ENCODE measurements at regions of chr17 and their contacts with region 1.

Region 1: DNA sequence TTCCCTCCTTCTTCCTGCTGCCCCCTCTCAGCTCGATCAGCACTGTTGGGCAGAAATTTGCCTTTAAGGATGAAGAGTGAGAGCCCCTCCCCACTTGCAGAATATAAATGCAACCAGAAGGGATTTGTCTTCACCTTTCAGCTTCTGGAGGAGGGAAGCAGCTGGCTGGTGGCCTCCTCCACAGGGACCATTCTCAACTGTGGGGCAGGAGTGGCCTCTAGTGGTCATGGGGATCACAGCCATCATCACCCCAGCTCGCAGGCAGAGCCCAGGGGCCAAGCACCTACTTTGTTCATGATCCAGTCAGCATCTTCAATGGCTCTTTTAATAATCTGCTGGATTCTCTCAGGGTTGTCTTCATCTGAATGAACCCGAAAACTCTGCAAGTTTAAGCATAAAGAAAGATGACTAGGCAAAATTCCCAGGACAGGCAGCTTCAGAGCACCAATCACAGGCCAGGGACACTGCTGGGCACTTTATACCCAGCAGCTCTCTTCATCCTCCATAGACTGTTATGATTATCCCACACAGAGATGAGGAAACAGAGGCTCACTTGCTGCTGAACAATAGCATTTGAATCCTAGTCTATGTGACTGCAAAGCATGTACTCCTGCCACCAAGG is 13.1 kb downstream of the LYRM9 start:
- DNase-seq: peak; percentile 88
- H3K4me3 ChIP-seq: no peak overlapping the region; a peak in 1 of 4 replicates
- H3K27ac ChIP-seq: no peak overlapping the region
- H3K4me1 ChIP-seq: peaks cover 0 to 3% of the 10 kb centered on the region in 2 experiments; a peak in 1 of 4 replicates
- H3K27me3 ChIP-seq: no peaks in the 10 kb centered on the region
- CTCF ChIP-seq: peak; percentile 89
- EP300 ChIP-seq: no peak
- RAD21 ChIP-seq: peak; percentile 95

Region 2: DNA sequence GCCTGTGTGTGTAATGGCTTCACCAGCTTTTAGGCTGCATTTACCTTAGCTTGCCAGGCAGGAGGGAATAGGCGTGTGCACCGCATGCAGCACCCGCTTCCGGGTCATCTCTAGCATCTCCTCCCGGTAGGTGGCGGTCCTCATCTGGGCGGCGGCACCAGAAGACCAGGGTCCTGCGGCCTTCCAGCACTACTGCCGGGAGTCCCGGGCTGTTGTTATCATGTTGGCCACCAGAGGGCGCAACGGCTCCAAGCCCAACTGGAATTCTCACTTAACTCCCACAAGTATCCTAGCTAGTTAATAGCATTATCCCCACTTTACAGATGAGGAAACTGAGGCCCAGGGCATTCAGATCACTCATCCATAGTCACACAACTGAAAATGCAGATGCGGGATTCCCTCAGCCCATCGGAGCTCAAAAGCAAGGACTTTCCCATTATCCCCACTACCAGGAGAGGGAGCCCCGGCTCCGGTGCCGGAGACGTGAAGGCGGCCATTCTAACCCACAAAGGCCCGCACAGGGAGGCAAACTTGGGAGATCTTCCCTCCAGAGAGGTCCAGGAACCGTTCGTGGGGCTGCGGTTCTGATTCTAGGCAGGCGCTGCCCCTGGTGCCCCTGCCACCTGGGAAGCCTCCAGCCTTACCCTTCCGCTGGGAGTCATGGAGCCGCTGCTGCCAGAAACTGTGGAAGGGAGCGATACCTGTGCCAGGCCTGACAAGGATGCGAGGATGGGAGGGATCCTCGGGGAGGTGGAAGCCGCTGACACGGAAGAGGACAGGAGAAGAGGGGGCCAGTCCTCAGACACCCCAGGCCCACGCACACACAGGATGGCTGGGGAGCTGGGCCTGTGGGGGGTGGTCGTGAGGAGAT is 225.2 kb before region 1 on chr17:
- CTCF ChIA-PET with region 1: interaction called, 104 read pairs
- POLR2A ChIA-PET with region 1: no interaction called
- DNase-seq: peak; percentile 93
- H3K4me3 ChIP-seq: peak overlapping the region in 1 of 2 experiments; percentile 43; a peak in 1 of 4 replicates
- H3K27ac ChIP-seq: no peak overlapping the region
- H3K4me1 ChIP-seq: no peaks in the 10 kb centered on the region; a peak in 1 of 4 replicates
- H3K27me3 ChIP-seq: no peaks in the 10 kb centered on the region
- CTCF ChIP-seq: peak; percentile 93
- EP300 ChIP-seq: no peak
- RAD21 ChIP-seq: peak; percentile 68

Region 3: GRCh38 chr17:27778193-27778592 is 101.9 kb before region 1 on chr17:
- CTCF ChIA-PET with region 1: interaction called, 19 read pairs
- POLR2A ChIA-PET with region 1: no interaction called
- DNase-seq: no peak
- H3K4me3 ChIP-seq: no peak overlapping the region
- H3K27ac ChIP-seq: no peak overlapping the region
- H3K4me1 ChIP-seq: peaks cover 0 to 3% of the 10 kb centered on the region in 2 experiments; a peak in 1 of 4 replicates
- H3K27me3 ChIP-seq: no peaks in the 10 kb centered on the region
- CTCF ChIP-seq: no peak
- EP300 ChIP-seq: no peak
- RAD21 ChIP-seq: no peak

Region 4: GRCh38 chr17:27805520-27806146 is 74.5 kb before region 1 on chr17:
- CTCF ChIA-PET with region 1: interaction called, 275 read pairs
- POLR2A ChIA-PET with region 1: no interaction called
- DNase-seq: peak; percentile 82
- H3K4me3 ChIP-seq: peak overlapping the region; percentile 3 to 32; a peak in 3 of 4 replicates
- H3K27ac ChIP-seq: no peak overlapping the region
- H3K4me1 ChIP-seq: peaks cover 0 to 9% of the 10 kb centered on the region in 2 experiments; a peak in 1 of 4 replicates
- H3K27me3 ChIP-seq: no peaks in the 10 kb centered on the region
- CTCF ChIP-seq: peak; percentile 78
- EP300 ChIP-seq: no peak
- RAD21 ChIP-seq: peak; percentile 87

Region 5: DNA sequence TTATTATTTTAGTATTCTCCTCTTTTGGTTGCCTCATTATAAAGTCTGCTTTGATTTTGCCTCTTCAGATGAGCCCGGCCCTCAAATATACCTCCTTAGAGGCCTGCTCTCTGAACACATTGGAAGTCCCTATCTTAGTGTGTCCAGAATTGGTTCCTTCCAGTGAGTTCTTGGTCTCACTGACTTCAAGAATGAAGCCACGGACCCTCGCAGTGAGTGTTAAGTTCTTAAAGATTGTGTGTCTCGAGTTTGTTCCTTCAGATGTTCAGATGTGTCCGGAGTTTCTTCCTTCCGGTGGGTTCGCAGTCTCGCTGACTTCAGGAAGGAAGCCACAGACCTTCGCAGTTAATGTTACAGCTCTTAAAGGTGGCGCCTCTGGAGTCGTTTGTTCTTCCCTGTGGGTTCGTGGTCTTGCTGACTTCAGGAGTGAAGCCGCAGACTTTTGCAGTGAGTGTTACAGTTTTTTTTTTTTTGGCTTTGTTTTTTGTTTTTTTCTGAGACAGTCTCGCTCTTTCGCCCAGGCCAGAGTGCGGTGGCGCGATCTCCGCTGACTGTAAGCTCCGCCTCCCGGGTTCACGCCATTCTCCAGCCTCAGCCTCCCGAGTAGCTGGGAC is 33.9 kb before region 1 on chr17:
- CTCF ChIA-PET with region 1: interaction called, 18 read pairs
- POLR2A ChIA-PET with region 1: no interaction called
- DNase-seq: no peak
- H3K4me3 ChIP-seq: no peak overlapping the region
- H3K27ac ChIP-seq: no peak overlapping the region
- H3K4me1 ChIP-seq: no peaks in the 10 kb centered on the region
- H3K27me3 ChIP-seq: no peaks in the 10 kb centered on the region; the same call in 1 of the 2 replicates
- CTCF ChIP-seq: no peak
- EP300 ChIP-seq: no peak
- RAD21 ChIP-seq: no peak

Region 6: DNA sequence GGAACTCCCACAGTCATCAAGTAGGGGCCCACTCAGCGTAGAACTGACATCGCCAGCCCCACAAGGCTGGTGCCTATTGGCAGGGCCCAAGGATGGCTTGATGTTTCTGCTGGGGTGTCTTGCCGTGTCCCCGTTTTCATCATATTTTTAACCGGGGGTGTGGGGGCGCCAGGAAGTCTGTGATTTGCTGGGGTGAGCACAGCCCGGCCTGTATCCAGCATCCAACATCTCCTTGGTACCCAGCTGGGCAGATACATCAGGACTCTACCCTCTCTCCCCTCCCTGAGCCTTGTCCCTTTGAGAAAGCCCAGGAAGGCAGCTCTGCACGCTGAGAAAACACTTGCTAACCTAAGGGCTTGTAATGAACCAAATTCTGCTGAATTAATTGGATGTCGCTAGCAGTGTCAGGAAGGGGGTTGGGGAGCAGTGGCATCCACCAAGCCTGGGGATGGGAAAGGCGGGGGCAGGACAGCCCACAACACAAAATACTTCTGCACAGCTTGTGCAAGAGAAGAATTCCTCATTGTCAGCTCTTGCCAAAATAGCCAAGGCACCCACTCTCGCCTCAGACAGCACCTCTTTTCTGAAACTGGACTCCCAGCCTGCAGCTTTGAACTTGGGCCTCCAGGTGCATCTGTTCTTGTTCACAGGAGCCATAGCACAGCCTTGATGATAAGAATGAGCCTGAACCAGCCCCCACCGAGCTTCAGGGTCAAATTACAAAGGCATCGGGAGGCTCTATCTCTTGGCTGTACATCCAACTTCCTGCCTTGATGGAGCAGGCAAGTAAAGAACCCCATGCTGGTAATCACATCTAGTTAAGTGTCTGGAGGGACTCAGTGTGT is 76.7 kb after region 1 on chr17:
- CTCF ChIA-PET with region 1: no interaction called
- POLR2A ChIA-PET with region 1: no interaction called
- DNase-seq: peak; percentile 25
- H3K4me3 ChIP-seq: no peak overlapping the region
- H3K27ac ChIP-seq: no peak overlapping the region
- H3K4me1 ChIP-seq: peaks cover 0 to 8% of the 10 kb centered on the region in 2 experiments; a peak in 1 of 4 replicates
- H3K27me3 ChIP-seq: no peaks in the 10 kb centered on the region
- CTCF ChIP-seq: no peak
- EP300 ChIP-seq: no peak
- RAD21 ChIP-seq: no peak

Region 7: GRCh38 chr17:28252436-28252835 is 372.3 kb after region 1 on chr17:
- CTCF ChIA-PET with region 1: interaction called, 15 read pairs
- POLR2A ChIA-PET with region 1: no interaction called
- DNase-seq: no peak
- H3K4me3 ChIP-seq: no peak overlapping the region
- H3K27ac ChIP-seq: no peak overlapping the region
- H3K4me1 ChIP-seq: peaks cover 0 to 3% of the 10 kb centered on the region in 2 experiments; a peak in 1 of 4 replicates
- H3K27me3 ChIP-seq: no peaks in the 10 kb centered on the region
- CTCF ChIP-seq: no peak
- EP300 ChIP-seq: no peak
- RAD21 ChIP-seq: no peak

Measured in SK-N-SH (cell line).